T-cell (primary cell): ENCODE measurements at regions of chr16 and their contacts with region 1.

Region 1: GRCh38 chr16:22418826-22419225 is 44.4 kb upstream of the CDR2 start:
- DNase-seq: no peak
- ATAC-seq: no peak
- H3K4me3 ChIP-seq: no peak overlapping the region
- H3K4me3 Mint-ChIP-seq: no peak overlapping the region
- H3K27ac ChIP-seq: no peak overlapping the region
- H3K27ac Mint-ChIP-seq: peak overlapping the region in 1 of 2 donors; percentile 5
- H3K4me1 ChIP-seq: no peaks in the 10 kb centered on the region
- H3K4me1 Mint-ChIP-seq: no peaks in the 10 kb centered on the region
- H3K27me3 ChIP-seq: no peaks in the 10 kb centered on the region
- H3K27me3 Mint-ChIP-seq: no peaks in the 10 kb centered on the region

Region 2: GRCh38 chr16:22098405-22099255 is 320.2 kb before region 1 on chr16:
- CTCF ChIA-PET with region 1: no interaction called
- POLR2A ChIA-PET with region 1: no interaction called
- DNase-seq: peak in 2 of 35 experiments; percentile 20 to 60
- ATAC-seq: peak in 3 of 4 experiments; percentile 63 to 75 (median 71)
- H3K4me3 ChIP-seq: no peak overlapping the region
- H3K4me3 Mint-ChIP-seq: no peak overlapping the region
- H3K27ac ChIP-seq: no peak overlapping the region
- H3K27ac Mint-ChIP-seq: no peak overlapping the region
- H3K4me1 ChIP-seq: peaks cover 0 to 3% of the 10 kb centered on the region in 2 experiments
- H3K4me1 Mint-ChIP-seq: peaks cover 0 to 3% (median 2%) of the 10 kb centered on the region in 3 donors
- H3K27me3 ChIP-seq: peaks cover 0 to 14% of the 10 kb centered on the region in 2 experiments
- H3K27me3 Mint-ChIP-seq: peaks cover 15% of the 10 kb centered on the region in 2 donors

Region 3: GRCh38 chr16:22307838-22308237 is 111.0 kb before region 1 on chr16:
- CTCF ChIA-PET with region 1: no interaction called
- POLR2A ChIA-PET with region 1: interaction called in 1 of 2 experiments, 10 read pairs
- DNase-seq: no peak
- ATAC-seq: no peak
- H3K4me3 ChIP-seq: no peak overlapping the region
- H3K4me3 Mint-ChIP-seq: no peak overlapping the region
- H3K27ac ChIP-seq: no peak overlapping the region
- H3K27ac Mint-ChIP-seq: no peak overlapping the region
- H3K4me1 ChIP-seq: no peaks in the 10 kb centered on the region
- H3K4me1 Mint-ChIP-seq: peaks cover 8 to 18% (median 13%) of the 10 kb centered on the region in 3 donors
- H3K27me3 ChIP-seq: no peaks in the 10 kb centered on the region
- H3K27me3 Mint-ChIP-seq: no peaks in the 10 kb centered on the region